Activated B cell treated with CpG ODN at 0.5 μM for 24 hours (primary cell): ENCODE measurements at regions of chr9 and their contacts with region 1.

Region 1: DNA sequence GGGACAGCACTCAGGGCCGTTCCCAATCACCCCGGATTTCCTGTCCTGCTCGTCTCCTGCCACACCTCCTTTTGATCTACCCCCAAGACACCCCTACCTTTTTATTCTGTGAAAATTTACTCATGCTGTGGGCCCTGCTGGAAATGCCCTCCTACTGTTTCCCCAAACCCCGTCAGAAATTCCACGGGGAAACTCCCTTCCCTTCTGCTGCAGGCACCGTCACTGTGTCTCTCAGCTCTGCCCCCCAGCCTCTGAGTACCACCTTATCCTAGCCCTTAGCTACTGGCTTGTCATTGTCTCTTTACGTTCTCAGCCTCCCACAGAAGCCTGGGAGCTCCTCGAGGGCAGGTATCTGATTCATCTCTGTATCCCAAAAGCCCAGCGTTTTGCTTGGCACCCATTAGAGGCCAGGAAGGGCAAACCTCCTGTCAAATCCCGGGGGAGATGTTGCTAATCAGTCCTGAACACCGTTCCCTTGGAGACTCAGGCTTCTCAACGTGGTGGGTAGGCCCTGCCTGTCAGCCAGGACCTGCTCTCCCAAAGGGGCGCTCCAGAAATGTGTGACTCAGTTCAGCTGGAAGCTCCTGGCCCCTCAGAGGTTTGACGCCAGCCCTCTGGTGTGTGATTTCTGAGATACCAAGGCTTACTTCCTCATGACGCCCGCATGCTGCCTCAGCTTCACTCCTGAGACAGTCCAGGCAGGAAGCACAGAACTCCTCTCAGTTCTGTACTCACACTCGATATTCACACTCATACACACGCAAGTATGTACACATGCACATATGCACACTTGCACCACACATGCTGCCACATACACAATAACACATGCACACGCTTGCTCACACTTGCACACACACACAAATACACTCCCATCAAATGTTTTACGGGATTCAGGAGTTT is 50.7 kb upstream of the GRHPR start:
- DNase-seq: peak; percentile 48
- ATAC-seq: peak; percentile 16
- H3K4me3 Mint-ChIP-seq: peak overlapping the region; percentile 57
- H3K27ac Mint-ChIP-seq: peak overlapping the region; percentile 100
- H3K4me1 Mint-ChIP-seq: peaks cover 91% of the 10 kb centered on the region
- H3K27me3 Mint-ChIP-seq: no peaks in the 10 kb centered on the region
- CTCF ChIP-seq: no peak

Region 2: DNA sequence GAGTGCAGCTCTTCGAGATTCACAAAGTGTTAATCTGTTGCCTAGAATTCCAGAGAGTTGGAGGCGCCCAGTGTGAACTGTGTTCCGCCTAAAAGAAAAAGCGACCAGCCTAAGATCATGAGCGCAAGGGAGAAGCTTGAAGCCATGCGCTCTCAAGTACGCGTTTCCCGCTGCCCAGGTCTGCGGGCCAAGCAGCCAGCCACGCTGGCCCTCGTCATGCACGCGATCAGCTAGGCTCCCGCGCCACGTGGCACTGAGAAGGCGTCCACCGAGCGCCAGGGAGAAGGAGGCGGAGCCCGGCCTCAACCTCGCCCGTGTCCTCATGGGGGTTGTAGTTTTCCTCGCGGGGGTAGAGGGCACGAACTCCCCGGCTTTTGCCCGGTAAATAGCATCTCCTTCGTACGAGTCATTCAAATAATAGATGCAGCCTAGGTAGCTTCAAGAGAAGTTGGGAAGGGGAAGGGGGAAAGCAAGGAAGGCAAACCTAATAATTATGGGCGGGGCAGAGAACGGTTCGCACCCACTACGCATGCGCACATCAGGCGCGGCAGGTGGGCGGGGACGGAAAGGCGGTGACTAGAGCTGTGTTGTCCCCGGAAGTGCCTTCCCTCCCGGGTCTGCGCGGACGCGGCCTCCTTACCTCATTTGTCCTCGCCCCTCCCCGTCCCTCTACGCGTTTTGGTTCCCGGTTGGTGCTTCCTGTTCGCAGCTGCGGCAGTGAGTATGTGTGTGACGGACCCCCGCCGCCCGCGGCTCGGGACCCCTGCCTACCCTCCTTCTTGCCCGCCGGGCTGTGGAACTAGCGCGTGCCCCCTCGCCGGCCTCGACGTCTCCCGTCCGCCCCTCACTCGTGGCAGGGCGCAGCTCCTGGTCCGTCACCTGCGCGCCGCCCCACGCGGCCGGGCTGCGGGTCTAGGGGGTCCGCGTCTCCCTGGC is 251.6 kb before region 1 on chr9 and contains the start of gene ZCCHC7:
- CTCF ChIA-PET with region 1: no interaction called
- POLR2A ChIA-PET with region 1: interaction called, 11 read pairs
- intact Hi-C with region 1: no loop called
- DNase-seq: peak; percentile 93
- ATAC-seq: peak; percentile 94
- H3K4me3 Mint-ChIP-seq: peak within 1 kb of the TSS; percentile 99
- H3K27ac Mint-ChIP-seq: peak within 1 kb of the TSS; percentile 96
- H3K4me1 Mint-ChIP-seq: peaks cover 46% of the 10 kb centered on the region
- H3K27me3 Mint-ChIP-seq: no peaks in the 10 kb centered on the region
- CTCF ChIP-seq: no peak
- total RNA-seq, gene ZCCHC7: 70.3 and 70.8 TPM in 2 replicates

Region 3: GRCh38 chr9:37209431-37210386 is 162.1 kb before region 1 on chr9:
- CTCF ChIA-PET with region 1: no interaction called
- POLR2A ChIA-PET with region 1: no interaction called
- intact Hi-C with region 1: no loop called
- DNase-seq: no peak
- ATAC-seq: peak; percentile 35
- H3K4me3 Mint-ChIP-seq: peak overlapping the region; percentile 63
- H3K27ac Mint-ChIP-seq: peak overlapping the region; percentile 88
- H3K4me1 Mint-ChIP-seq: peaks cover 81% of the 10 kb centered on the region
- H3K27me3 Mint-ChIP-seq: no peaks in the 10 kb centered on the region
- CTCF ChIP-seq: no peak

Region 4: DNA sequence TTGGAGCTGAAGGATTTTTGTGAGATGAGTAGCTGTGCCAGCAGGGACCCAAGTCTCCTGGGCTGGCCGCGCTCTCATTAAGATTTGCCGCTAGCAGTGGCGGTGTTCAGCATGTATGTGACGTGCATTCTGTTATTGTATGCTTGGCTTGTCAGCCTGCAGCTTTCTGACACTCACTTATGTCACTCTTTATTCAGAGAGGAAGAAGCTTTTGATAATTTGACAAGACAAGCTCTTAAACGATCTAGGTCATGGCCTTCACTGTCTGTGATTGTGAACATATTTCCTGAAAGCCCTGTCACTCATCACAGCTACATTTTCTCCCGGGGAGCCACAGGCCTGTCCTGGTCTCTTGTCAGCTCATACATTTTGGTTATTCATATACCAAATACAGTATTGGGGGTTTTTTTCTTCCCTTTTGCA is 47.5 kb before region 1 on chr9:
- CTCF ChIA-PET with region 1: interaction called, 6 read pairs
- POLR2A ChIA-PET with region 1: interaction called, 34 read pairs
- intact Hi-C with region 1: no loop called
- DNase-seq: peak; percentile 42
- ATAC-seq: peak; percentile 86
- H3K4me3 Mint-ChIP-seq: peak overlapping the region; percentile 59
- H3K27ac Mint-ChIP-seq: peak overlapping the region; percentile 99
- H3K4me1 Mint-ChIP-seq: peaks cover 69% of the 10 kb centered on the region
- H3K27me3 Mint-ChIP-seq: no peaks in the 10 kb centered on the region
- CTCF ChIP-seq: no peak

Region 5: DNA sequence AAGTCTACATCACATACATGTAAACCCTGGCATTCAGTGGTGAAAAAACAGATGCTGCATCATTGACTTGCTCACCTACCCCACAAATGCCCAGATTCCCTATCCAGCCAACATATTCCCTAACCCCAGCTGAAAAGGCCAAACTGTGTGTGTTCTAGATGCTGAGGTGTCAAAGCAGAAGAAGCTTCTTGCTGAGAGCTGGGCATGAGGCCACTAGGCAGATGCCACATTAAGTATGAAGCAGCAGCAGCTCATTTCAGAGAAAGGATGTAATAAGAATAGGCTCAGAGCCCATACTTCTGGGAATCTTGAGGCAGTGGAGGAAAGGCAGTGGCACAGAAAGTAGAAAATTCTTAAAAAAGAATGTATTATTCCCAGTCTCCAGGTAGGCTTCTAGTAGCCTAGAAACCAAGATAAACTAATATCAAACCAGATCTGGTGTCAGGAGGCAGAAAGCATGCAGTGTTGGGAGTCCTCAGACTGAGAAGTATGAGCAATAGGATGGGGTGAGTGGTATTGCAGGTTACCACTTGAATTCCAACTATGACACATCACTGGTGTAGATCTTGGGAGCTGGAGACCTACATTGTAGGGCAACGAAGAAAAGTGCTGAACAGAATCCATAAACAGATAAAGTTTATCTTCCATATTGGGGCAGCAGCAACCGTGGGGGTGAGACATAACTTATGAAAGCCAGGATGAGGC is 21.2 kb before region 1 on chr9:
- CTCF ChIA-PET with region 1: no interaction called
- POLR2A ChIA-PET with region 1: interaction called, 5 read pairs
- intact Hi-C with region 1: loop called (anchors 2 kb)
- DNase-seq: no peak
- ATAC-seq: no peak
- H3K4me3 Mint-ChIP-seq: no peak overlapping the region
- H3K27ac Mint-ChIP-seq: peak overlapping the region; percentile 19
- H3K4me1 Mint-ChIP-seq: peaks cover 26% of the 10 kb centered on the region
- H3K27me3 Mint-ChIP-seq: no peaks in the 10 kb centered on the region
- CTCF ChIP-seq: no peak

Region 6: GRCh38 chr9:37415011-37415719 is 43.4 kb after region 1 on chr9:
- CTCF ChIA-PET with region 1: interaction called, 103 read pairs
- POLR2A ChIA-PET with region 1: interaction called, 975 read pairs
- intact Hi-C with region 1: no loop called
- DNase-seq: peak; percentile 55
- ATAC-seq: peak; percentile 77
- H3K4me3 Mint-ChIP-seq: peak overlapping the region; percentile 69
- H3K27ac Mint-ChIP-seq: peak overlapping the region; percentile 85
- H3K4me1 Mint-ChIP-seq: peaks cover 63% of the 10 kb centered on the region
- H3K27me3 Mint-ChIP-seq: no peaks in the 10 kb centered on the region
- CTCF ChIP-seq: peak; percentile 64

Region 7: DNA sequence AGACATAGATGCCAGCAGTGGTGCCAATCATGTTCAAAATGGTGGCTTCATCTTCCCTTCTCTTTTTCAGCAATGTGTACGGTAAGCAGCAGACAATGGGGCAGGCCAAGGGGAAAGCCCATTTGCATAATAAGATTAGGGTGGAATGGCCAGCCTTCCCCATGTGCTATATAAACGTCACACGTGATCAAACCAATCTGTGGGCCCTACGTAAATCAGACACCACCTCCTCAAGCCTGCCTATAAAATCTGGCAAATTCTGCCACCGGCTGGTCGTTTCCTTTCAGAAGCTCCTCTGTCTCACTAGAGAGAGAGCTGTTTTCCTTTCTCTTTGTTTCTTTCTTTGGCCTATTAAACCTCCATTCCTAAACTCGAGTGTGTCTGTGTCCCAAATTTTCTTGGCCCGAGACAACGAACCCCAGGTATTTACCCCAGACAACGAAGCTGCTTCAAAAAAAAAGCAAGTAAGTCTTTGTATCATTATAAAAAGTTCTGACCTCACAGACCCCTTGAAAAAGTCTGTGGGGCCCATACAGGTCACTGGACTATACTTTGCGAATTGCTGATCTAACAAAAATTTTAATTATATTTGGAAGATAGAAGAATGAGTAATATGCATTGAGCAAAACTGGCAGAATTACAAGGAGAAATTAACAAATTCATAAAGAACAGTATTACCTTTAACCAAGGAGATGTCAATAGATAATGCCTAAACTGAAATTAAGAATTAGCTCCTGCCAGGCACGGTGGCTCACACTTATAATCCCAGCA is 78.2 kb after region 1 on chr9:
- CTCF ChIA-PET with region 1: no interaction called
- POLR2A ChIA-PET with region 1: no interaction called
- intact Hi-C with region 1: no loop called
- DNase-seq: no peak
- ATAC-seq: no peak
- H3K4me3 Mint-ChIP-seq: no peak overlapping the region
- H3K27ac Mint-ChIP-seq: no peak overlapping the region
- H3K4me1 Mint-ChIP-seq: peaks cover 40% of the 10 kb centered on the region
- H3K27me3 Mint-ChIP-seq: no peaks in the 10 kb centered on the region
- CTCF ChIP-seq: no peak

Region 8: DNA sequence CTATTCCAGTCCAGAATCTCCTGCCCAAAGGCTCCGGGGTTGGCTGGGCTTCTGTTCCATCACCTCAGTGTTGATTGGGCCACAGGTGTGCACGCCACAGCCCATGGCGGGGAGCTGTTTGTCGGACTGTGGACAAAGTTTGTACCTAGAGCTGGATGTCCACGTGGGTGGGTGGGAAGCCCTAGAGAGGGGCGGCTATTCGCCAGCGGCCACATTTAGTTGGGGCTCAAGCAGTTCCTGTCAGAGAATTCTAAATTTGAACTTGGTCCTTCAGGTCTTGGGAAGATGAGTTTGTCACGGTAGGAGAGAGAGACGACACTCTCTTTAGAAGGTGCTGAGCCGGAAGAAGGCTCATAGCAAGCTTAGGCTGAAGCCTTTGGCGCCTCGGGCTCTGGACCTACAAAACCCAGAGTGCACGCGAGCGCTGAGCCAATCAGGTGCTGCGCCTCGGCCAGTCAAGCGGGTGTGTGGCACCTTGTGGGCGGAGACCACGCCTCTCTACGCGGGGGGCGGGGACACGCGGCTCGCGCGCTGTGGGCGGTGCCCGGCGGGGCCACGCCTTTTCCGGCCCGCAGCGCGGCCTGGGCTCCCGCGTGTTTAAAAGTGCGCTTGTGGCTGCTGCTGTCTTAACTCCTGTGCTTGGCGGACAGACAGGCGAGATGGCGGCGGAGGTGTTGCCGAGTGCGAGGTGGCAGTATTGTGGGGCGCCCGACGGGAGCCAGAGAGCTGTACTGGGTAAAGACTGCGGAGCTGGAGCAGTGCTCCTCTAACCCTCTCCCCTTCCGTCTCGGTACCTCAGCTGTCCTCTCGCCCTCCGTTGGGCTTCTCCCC is 113.8 kb after region 1 on chr9 and contains the start of gene POLR1E:
- CTCF ChIA-PET with region 1: no interaction called
- POLR2A ChIA-PET with region 1: interaction called, 5 read pairs
- intact Hi-C with region 1: loop called (anchors 2 kb)
- DNase-seq: peak; percentile 99
- ATAC-seq: peak; percentile 98
- H3K4me3 Mint-ChIP-seq: peak within 1 kb of the TSS; percentile 92
- H3K27ac Mint-ChIP-seq: peak within 1 kb of the TSS; percentile 85
- H3K4me1 Mint-ChIP-seq: peaks cover 31% of the 10 kb centered on the region
- H3K27me3 Mint-ChIP-seq: no peaks in the 10 kb centered on the region
- CTCF ChIP-seq: no peak
- total RNA-seq, gene POLR1E: 45.4 and 46.3 TPM in 2 replicates

Region 9: GRCh38 chr9:37812773-37813379 is 441.1 kb after region 1 on chr9:
- CTCF ChIA-PET with region 1: no interaction called
- POLR2A ChIA-PET with region 1: no interaction called
- intact Hi-C with region 1: no loop called
- DNase-seq: no peak
- ATAC-seq: no peak
- H3K4me3 Mint-ChIP-seq: no peak overlapping the region
- H3K27ac Mint-ChIP-seq: no peak overlapping the region
- H3K4me1 Mint-ChIP-seq: no peaks in the 10 kb centered on the region
- H3K27me3 Mint-ChIP-seq: no peaks in the 10 kb centered on the region
- CTCF ChIP-seq: no peak

Region 10: DNA sequence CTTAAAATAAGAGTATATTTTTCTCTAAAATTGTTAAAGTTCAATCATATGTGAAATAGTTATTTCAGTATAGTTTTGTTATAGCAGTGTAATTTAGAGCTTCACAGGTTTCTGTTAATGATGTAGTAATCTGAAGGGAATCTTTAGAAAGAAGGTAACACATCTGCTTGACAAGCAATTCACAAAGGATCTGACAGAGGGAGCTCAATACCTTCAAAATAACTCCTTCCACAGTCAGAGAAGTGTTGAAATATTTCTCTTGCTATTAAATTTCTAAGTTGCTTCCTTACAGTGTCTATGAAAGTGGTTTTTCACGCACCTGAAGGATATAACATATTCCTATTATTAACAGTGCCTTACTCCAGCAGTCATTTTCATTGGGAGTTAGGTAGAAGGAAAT is 487.2 kb after region 1 on chr9:
- CTCF ChIA-PET with region 1: no interaction called
- POLR2A ChIA-PET with region 1: no interaction called
- intact Hi-C with region 1: no loop called
- DNase-seq: no peak
- ATAC-seq: no peak
- H3K4me3 Mint-ChIP-seq: no peak overlapping the region
- H3K27ac Mint-ChIP-seq: no peak overlapping the region
- H3K4me1 Mint-ChIP-seq: no peaks in the 10 kb centered on the region
- H3K27me3 Mint-ChIP-seq: no peaks in the 10 kb centered on the region
- CTCF ChIP-seq: no peak